Heart right ventricle (tissue), 16 donors: ENCODE measurements at regions of chr19 and their contacts with region 1.

Region 1: GRCh38 chr19:4851551-4852290 is 15.7 kb downstream of the PLIN3 start:
- DNase-seq: peak; percentile 70 to 81
- ATAC-seq: peak; percentile 66 to 91 (median 80)
- H3K4me3 ChIP-seq: no peak overlapping the region
- H3K27ac ChIP-seq: no peak overlapping the region
- H3K4me1 ChIP-seq: peaks cover 0 to 3% (median 0%) of the 10 kb centered on the region in 9 donors
- H3K27me3 ChIP-seq: no peaks in the 10 kb centered on the region
- CTCF ChIP-seq: peak; percentile 75 to 93 (median 86)

Region 2: DNA sequence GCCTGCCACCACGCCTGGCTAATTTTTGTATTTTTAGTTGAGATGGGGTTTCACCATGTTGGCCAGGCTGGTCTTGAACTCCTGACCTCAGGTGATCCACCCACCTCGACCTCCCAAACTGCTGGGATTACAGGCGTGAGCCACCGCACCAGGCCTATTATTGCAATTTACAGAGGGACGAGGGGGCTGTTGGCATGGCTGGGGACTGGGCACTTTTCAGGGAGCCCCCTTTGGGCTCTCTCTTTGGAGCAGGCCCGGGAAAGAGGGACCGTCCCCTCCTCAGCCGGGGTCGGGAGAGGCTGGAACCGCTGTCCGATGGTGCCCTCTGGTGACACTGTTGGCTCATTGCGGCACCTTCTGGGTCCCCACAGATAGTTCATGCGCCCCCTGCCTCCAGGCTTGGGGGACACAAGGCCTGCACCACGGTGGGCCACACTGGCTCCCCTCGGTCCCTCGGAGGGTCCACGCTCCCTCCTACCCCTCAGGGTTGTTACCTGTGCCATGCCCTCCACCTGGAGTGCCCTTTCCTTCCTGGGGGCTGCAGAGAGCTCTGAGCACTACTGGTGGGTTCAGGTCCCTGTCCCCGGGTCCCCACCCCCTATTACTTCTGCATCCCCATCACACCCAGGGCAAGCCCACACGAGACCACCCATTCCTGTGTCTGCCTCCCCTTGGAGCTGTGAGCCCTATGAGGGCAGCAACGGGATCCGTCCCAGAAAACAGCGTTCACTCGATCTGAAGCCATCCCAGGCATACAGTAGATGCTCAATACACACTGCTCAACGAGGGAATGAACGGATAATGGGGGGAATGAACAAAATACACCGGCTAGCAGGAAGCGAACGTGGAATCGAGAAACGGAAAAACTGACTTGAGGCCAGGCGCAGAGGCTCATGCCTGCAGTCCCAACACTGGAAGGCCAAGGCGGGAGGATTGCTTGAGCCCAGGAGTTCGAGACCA is 47.7 kb before region 1 on chr19:
- intact Hi-C with region 1: loop called in 5 of 10 experiments (anchors 1 to 5 kb)
- DNase-seq: peak; percentile 55 to 69
- ATAC-seq: peak; percentile 50 to 78 (median 63)
- H3K4me3 ChIP-seq: no peak overlapping the region
- H3K27ac ChIP-seq: peak overlapping the region in 1 of 10 donors; percentile 80
- H3K4me1 ChIP-seq: peaks cover 0 to 34% (median 18%) of the 10 kb centered on the region in 9 donors
- H3K27me3 ChIP-seq: no peaks in the 10 kb centered on the region
- CTCF ChIP-seq: peak; percentile 61 to 89 (median 79)

Region 3: GRCh38 chr19:4815426-4816201 is 36.1 kb before region 1 on chr19:
- intact Hi-C with region 1: loop called in 5 of 10 experiments (anchors 1 to 2 kb)
- DNase-seq: peak; percentile 78 to 94
- ATAC-seq: peak; percentile 81 to 96 (median 94)
- H3K4me3 ChIP-seq: peak overlapping the region in 7 of 10 donors; percentile 9 to 42 (median 30)
- H3K27ac ChIP-seq: peak overlapping the region in 6 of 10 donors; percentile 36 to 82 (median 56)
- H3K4me1 ChIP-seq: peaks cover 6 to 43% (median 19%) of the 10 kb centered on the region in 9 donors
- H3K27me3 ChIP-seq: no peaks in the 10 kb centered on the region
- CTCF ChIP-seq: no peak